GM12878 (cell line): ENCODE measurements at regions of chr17 and their contacts with region 1.

Region 1: GRCh38 chr17:7351665-7352501 is at the start of gene KCTD11:
- DNase-seq: no peak
- ATAC-seq: peak; percentile 81
- H3K4me3 ChIP-seq: peak within 1 kb of the TSS; percentile 88
- H3K27ac ChIP-seq: peak within 1 kb of the TSS; percentile 59
- H3K4me1 ChIP-seq: peaks cover 23% of the 10 kb centered on the region
- H3K27me3 ChIP-seq: no peaks in the 10 kb centered on the region
- CTCF ChIP-seq: peak in 2 of 3 experiments; percentile 55 to 59; a peak in 3 of 6 replicates
- EP300 ChIP-seq: no peak
- POLR2A ChIP-seq: peak; percentile 81
- RAD21 ChIP-seq: 0 out of 2 replicates have a peak, but pooled peaks have one; percentile 27
- polyA plus RNA-seq, gene KCTD11: 0.05 to 0.09 TPM

Region 2: GRCh38 chr17:7589204-7589868 is 237.5 kb after region 1 on chr17:
- CTCF ChIA-PET with region 1: interaction called, 14 read pairs
- POLR2A ChIA-PET with region 1: no interaction called
- RAD21 ChIA-PET with region 1: interaction called, 8 read pairs
- SMC1A ChIA-PET with region 1: interaction called, 4 read pairs
- in situ Hi-C with region 1: no loop called
- intact Hi-C with region 1: no loop called
- DNase-seq: no peak
- ATAC-seq: peak; percentile 86
- H3K4me3 ChIP-seq: no peak overlapping the region
- H3K27ac ChIP-seq: no peak overlapping the region
- H3K4me1 ChIP-seq: peaks cover 3% of the 10 kb centered on the region; the same call in 1 of the 2 replicates
- H3K27me3 ChIP-seq: no peaks in the 10 kb centered on the region
- CTCF ChIP-seq: peak; percentile 55 to 72 (median 65); a peak in 5 of 6 replicates
- EP300 ChIP-seq: no peak
- POLR2A ChIP-seq: no peak
- RAD21 ChIP-seq: peak; percentile 42